ENCODE measurements at regions of chr22 and their contacts with region 1.

Region 1: GRCh38 chr22:41857155-41857859 is 24.4 kb downstream of the SREBF2 start:
- DNase-seq: peak; percentile 61 to 71
- H3K4me3 ChIP-seq: no peak overlapping the region
- H3K4me3 Mint-ChIP-seq: no peak overlapping the region
- H3K27ac Mint-ChIP-seq: peak overlapping the region; percentile 74
- H3K4me1 ChIP-seq: peaks cover 36% of the 10 kb centered on the region
- H3K4me1 Mint-ChIP-seq: peaks cover 22% of the 10 kb centered on the region
- H3K27me3 ChIP-seq: no peaks in the 10 kb centered on the region
- H3K27me3 Mint-ChIP-seq: no peaks in the 10 kb centered on the region
- CTCF ChIP-seq: peak; percentile 42 to 59

Region 2: GRCh38 chr22:41822317-41823060 is 34.8 kb before region 1 on chr22:
- CTCF ChIA-PET with region 1: interaction called, 5 read pairs
- POLR2A ChIA-PET with region 1: no interaction called
- intact Hi-C with region 1: loop called (anchors 5 kb)
- DNase-seq: peak in 1 of 2 experiments; percentile 54
- H3K4me3 ChIP-seq: no peak overlapping the region
- H3K4me3 Mint-ChIP-seq: no peak overlapping the region
- H3K27ac Mint-ChIP-seq: peak overlapping the region; percentile 8
- H3K4me1 ChIP-seq: no peaks in the 10 kb centered on the region
- H3K4me1 Mint-ChIP-seq: peaks cover 15% of the 10 kb centered on the region
- H3K27me3 ChIP-seq: no peaks in the 10 kb centered on the region
- H3K27me3 Mint-ChIP-seq: no peaks in the 10 kb centered on the region
- CTCF ChIP-seq: peak; percentile 45 to 53

Region 3: DNA sequence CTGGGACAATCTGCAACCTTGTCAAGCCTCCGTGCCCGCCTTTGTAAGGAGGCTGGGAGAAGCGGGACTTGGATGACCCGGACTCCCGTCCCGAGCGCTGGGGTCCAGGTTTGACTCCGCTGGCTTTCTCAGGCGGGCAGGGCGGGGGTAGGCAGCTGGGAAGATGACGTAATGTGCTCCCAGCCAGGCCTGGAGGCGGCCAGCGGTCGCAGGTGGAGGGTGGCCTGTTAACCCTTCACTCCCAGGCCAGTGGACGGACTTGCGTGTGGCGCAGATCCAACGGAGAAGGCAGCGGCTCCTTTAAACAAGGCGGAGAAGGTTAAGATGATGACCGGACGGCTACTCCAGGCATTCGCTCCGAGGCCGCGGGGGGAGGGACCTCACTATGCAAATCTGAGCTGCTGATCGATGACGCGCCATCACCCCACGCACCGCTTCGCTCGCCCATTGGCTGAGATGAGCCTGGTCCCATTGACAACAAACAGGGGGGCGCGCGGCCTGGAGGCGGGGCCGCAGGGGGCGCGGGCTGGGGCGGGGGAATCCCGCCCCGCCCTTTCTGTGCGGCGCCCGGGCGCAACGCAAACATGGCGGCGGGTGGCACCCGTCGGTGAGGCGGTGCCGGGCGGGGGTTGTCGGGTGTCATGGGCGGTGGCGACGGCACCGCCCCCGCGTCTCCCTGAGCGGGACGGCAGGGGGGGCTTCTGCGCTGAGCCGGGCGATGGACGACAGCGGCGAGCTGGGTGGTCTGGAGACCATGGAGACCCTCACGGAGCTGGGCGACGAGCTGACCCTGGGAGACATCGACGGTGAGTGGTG is 24.5 kb before region 1 on chr22 and contains the start of gene SREBF2:
- CTCF ChIA-PET with region 1: interaction called, 4 read pairs
- POLR2A ChIA-PET with region 1: interaction called, 10 read pairs
- intact Hi-C with region 1: no loop called
- DNase-seq: peak; percentile 99 to 100
- H3K4me3 ChIP-seq: peak within 1 kb of the TSS; percentile 94
- H3K4me3 Mint-ChIP-seq: peak within 1 kb of the TSS; percentile 98
- H3K27ac Mint-ChIP-seq: peak within 1 kb of the TSS; percentile 95
- H3K4me1 ChIP-seq: peaks cover 11% of the 10 kb centered on the region
- H3K4me1 Mint-ChIP-seq: peaks cover 14% of the 10 kb centered on the region
- H3K27me3 ChIP-seq: no peaks in the 10 kb centered on the region
- H3K27me3 Mint-ChIP-seq: no peaks in the 10 kb centered on the region
- CTCF ChIP-seq: no peak
- total RNA-seq, gene SREBF2: 134 and 150 TPM in 2 replicates